HEK293T (cell line): ENCODE measurements at regions of chr22 and their contacts with region 1.

Region 1: GRCh38 chr22:46762238-46763050 is at the start of gene TBC1D22A:
- DNase-seq: peak; percentile 98

Region 2: GRCh38 chr22:46739094-46739870 is 23.2 kb before region 1 on chr22:
- CTCF ChIA-PET with region 1: interaction called, 3 read pairs
- POLR2A ChIA-PET with region 1: interaction called, 13 read pairs
- DNase-seq: no peak

Region 3: GRCh38 chr22:46748908-46749675 is 13.4 kb before region 1 on chr22:
- CTCF ChIA-PET with region 1: interaction called, 6 read pairs
- POLR2A ChIA-PET with region 1: interaction called, 34 read pairs
- DNase-seq: no peak

Region 4: DNA sequence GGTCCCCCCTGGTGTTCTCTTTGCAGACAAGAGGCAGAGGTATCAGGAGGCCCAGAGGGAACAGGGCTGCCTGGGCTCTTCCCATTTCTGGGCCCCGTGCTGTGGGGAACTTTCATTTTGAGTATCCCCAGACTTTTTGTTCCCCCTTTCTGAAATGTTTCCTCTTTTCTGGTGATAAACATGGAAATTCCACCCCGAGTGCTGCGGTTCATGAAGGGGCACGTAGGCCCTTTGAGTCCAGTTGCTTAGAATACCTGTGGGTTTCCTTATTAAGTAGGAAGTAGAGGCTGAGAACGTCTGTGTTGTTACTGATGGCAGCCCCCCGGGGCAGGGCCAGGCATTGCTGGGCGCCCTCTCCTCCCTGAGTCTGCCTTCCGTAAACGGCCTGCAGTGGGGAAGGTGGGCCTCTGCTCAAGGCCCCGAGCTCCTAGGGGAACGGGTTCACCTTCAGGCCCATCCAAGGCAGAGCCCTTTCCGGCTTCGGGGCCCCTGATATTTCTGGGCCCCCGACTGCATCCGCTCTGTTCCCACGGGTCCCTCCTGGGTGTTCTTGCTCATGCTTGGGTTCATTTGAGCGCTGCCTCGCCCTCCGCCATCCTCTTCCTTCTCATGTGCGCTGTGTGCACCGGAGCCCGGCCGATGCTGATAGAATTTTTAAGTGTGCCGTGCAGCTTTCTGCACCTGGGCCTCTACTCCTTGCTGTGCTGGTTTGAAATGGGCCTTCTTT is 12.0 kb after region 1 on chr22:
- CTCF ChIA-PET with region 1: interaction called, 8 read pairs
- POLR2A ChIA-PET with region 1: interaction called, 41 read pairs
- DNase-seq: no peak

Region 5: DNA sequence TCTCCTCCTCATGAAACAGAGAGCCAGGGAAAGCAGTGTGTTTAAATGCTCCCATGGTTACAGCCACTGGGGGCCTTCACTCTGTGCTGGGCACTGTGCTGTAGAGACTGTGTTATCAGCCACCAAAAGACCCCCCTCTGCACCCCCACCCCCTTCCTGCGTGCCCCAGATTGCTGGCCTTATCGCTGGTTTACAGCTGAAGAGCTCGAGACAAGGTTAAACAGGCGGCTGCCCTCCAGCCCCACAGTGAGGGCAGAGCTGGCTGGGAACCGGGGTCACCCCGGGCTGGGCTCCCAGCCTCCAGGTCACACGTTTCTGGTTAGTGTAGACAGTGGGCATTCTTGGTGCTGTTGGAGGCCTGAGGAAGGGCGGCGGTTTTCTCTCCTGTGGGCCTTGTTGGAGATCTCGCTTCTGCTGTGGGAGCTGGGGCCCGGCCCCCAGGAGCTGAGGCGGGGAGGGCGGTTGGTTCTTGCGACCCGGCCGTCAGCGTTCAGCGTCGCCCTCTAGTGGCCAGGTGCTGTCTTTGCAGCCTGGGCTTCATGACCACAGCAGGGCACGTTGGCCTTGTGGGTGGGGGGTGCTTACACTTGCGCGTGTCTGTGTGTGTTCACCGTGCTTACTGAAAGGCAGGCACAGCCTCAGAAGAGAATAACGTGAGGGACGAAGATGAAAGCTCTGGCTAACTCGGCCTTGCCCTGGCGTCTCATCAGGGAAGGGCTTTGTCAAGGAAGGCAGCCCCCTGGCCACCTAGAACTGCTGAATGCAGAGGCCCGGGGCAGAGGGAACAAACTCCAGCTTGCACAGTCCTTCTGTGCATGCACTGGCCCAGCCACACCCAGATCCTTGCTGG is 40.8 kb after region 1 on chr22:
- CTCF ChIA-PET with region 1: interaction called, 7 read pairs
- POLR2A ChIA-PET with region 1: interaction called, 13 read pairs
- DNase-seq: peak; percentile 84